ENCODE measurements at regions of chr16 and their contacts with region 1.

Region 1: GRCh38 chr16:28863929-28864793 is 518 bp downstream of the SH2B1 start:
- DNase-seq: no peak
- ATAC-seq: no peak
- H3K4me3 Mint-ChIP-seq: peak overlapping the region; percentile 98
- H3K27ac Mint-ChIP-seq: peak overlapping the region; percentile 99
- H3K4me1 Mint-ChIP-seq: peaks cover 24% of the 10 kb centered on the region
- H3K27me3 Mint-ChIP-seq: no peaks in the 10 kb centered on the region
- CTCF ChIP-seq: no peak

Region 2: GRCh38 chr16:28513484-28514181 is 350.5 kb before region 1 on chr16:
- CTCF ChIA-PET with region 1: no interaction called
- POLR2A ChIA-PET with region 1: no interaction called
- intact Hi-C with region 1: no loop called
- DNase-seq: no peak
- ATAC-seq: no peak
- H3K4me3 Mint-ChIP-seq: no peak overlapping the region
- H3K27ac Mint-ChIP-seq: no peak overlapping the region
- H3K4me1 Mint-ChIP-seq: peaks cover 2% of the 10 kb centered on the region
- H3K27me3 Mint-ChIP-seq: no peaks in the 10 kb centered on the region
- CTCF ChIP-seq: no peak

Region 3: DNA sequence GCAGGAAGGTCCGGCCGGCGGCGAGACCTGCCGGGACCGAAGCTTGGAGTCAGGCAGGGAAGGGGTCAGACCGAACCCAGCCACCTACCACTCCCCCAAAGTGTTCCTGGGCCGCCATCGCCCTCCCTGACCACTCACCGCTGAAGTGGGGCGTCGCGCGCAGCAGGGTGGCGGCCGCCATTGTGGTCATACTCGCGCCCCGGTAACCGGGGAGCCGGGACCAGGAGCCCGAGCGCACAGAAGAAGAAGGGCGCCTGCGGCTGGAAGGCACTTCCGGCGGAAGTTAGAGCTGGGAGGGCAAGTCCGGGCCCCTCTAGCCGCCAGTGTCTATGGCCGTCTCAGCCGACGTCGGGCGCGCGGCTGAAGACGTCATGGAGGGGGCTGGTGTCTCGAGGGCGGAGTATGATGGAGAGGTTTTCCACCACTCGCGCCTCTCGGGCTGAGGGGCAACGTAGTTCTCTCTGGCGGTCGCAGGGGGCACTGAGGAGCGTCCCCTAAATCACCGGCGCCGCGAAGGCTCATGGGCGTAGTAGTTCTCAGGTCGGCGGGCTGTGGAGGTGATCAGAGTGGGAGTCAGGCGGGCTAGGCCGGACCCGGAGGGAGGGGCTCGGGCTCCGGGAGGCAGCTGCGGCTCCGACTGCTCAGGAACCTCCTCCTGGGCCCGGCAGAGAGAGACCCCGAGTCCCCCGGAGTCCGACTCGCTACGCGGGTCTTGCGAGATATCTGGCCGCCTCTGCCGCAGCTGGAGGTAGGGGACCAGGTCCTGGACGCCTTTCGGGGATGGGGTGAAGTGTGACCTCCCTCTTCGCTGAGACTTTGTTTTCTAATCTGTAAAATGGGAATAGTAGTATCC is 17.9 kb before region 1 on chr16 and contains the start of gene TUFM:
- CTCF ChIA-PET with region 1: interaction called, 9 read pairs
- POLR2A ChIA-PET with region 1: interaction called, 86 read pairs
- intact Hi-C with region 1: no loop called
- DNase-seq: peak; percentile 98
- ATAC-seq: peak; percentile 95
- H3K4me3 Mint-ChIP-seq: peak within 1 kb of the TSS; percentile 99
- H3K27ac Mint-ChIP-seq: peak within 1 kb of the TSS; percentile 98
- H3K4me1 Mint-ChIP-seq: peaks cover 20% of the 10 kb centered on the region
- H3K27me3 Mint-ChIP-seq: no peaks in the 10 kb centered on the region
- CTCF ChIP-seq: peak; percentile 59
- total RNA-seq, gene TUFM: 309 to 323 TPM

Region 4: DNA sequence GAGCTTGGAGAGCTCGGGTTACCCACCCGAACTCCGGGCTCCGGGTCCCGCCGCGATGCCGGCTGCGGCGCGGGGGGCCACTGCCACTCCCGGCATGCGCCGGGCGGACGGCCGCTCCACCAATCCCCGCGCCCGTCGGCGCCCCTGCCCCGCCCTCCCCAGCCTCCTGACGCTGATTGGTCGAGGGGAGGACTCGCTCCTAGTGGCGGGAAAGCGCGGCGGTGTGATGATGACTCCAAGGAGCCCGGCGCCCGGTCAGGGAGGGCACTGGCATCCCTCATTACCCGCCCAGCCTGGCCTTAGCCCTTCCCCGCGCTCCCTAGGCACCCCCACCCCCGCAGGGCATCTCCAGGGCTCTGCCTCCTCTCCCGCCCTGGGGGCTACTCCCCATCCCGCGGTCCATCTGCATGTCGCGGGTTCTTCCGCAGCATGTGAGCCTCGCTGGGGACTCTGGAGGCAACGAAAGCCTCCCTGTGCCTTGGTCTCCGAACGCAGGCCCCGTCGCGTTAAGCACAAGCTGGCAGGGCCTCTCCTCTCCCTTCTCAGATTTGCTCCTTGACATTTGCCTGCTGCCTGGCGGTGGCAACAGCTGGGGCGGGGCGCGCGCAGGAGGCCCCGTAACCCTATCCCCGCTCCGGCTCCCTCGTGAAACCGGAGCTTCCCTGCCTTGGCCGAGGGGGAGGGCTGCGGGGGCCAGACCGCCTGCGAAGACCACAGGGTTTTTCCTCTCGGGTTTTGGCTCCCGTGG is 15.9 kb after region 1 on chr16:
- CTCF ChIA-PET with region 1: interaction called, 28 read pairs
- POLR2A ChIA-PET with region 1: interaction called, 40 read pairs
- intact Hi-C with region 1: no loop called
- DNase-seq: peak; percentile 94
- ATAC-seq: peak; percentile 96
- H3K4me3 Mint-ChIP-seq: peak overlapping the region; percentile 90
- H3K27ac Mint-ChIP-seq: peak overlapping the region; percentile 79
- H3K4me1 Mint-ChIP-seq: peaks cover 18% of the 10 kb centered on the region
- H3K27me3 Mint-ChIP-seq: peaks cover 10% of the 10 kb centered on the region
- CTCF ChIP-seq: no peak

Region 5: GRCh38 chr16:28891964-28892890 is 28.1 kb after region 1 on chr16:
- CTCF ChIA-PET with region 1: no interaction called
- POLR2A ChIA-PET with region 1: no interaction called
- intact Hi-C with region 1: no loop called
- DNase-seq: no peak
- ATAC-seq: no peak
- H3K4me3 Mint-ChIP-seq: no peak overlapping the region
- H3K27ac Mint-ChIP-seq: no peak overlapping the region
- H3K4me1 Mint-ChIP-seq: no peaks in the 10 kb centered on the region
- H3K27me3 Mint-ChIP-seq: no peaks in the 10 kb centered on the region
- CTCF ChIP-seq: no peak

Measured in activated CD8-positive, alpha-beta T cell treated with anti-CD3 and anti-CD28 coated beads for 36 hours (primary cell).